ENCODE measurements at regions of chr3 and their contacts with region 1.

Region 1: GRCh38 chr3:179464323-179465089 is 13.2 kb upstream of the GNB4 start:
- DNase-seq: peak in 1 of 4 experiments; percentile 29
- ATAC-seq: peak; percentile 84
- H3K4me3 ChIP-seq: no peak overlapping the region
- H3K27ac ChIP-seq: no peak overlapping the region
- H3K4me1 ChIP-seq: peaks cover 4 to 5% of the 10 kb centered on the region in 2 experiments; a peak in 1 of 5 replicates
- H3K27me3 ChIP-seq: peaks cover under 1 to 3% of the 10 kb centered on the region in 2 experiments; a peak in 3 of 5 replicates
- CTCF ChIP-seq: no peak
- EP300 ChIP-seq: no peak
- POLR2A ChIP-seq: no peak
- RAD21 ChIP-seq: no peak

Region 2: DNA sequence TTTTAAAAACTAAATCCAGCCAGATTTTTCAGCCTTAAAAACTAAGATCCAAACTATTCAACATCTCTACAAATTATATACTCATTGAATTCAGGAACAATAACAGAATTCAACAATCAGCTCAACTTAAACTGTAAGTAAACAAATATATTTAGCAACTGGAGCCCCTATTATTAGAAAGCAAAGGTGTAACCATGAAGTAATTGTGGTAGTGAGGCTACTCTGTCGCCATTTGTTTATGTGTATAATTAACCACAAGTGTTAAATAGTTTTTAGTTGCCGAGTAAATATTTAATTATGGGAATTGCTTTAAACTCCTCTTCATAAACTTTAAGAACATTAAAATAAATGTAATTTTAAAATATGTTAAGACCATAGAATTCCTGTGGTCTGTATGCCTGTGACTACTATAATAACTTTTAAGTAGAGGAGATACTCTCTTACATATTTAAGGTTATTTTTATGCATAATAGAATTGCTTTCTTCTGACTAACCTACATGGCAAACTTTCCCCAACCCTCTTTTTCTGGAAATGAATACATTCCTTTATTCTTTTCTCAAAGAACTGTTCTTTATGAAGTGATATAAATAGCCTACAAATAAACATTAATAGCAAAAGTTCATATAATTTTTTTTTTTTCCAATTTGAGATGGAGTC is 65.8 kb before region 1 on chr3:
- CTCF ChIA-PET with region 1: no interaction called
- POLR2A ChIA-PET with region 1: no interaction called
- in situ Hi-C with region 1: no loop called
- intact Hi-C with region 1: no loop called
- DNase-seq: no peak
- ATAC-seq: no peak
- H3K4me3 ChIP-seq: no peak overlapping the region
- H3K27ac ChIP-seq: no peak overlapping the region
- H3K4me1 ChIP-seq: no peaks in the 10 kb centered on the region
- H3K27me3 ChIP-seq: no peaks in the 10 kb centered on the region
- CTCF ChIP-seq: no peak
- EP300 ChIP-seq: no peak
- POLR2A ChIP-seq: no peak
- RAD21 ChIP-seq: no peak

Region 3: GRCh38 chr3:179536256-179536655 is 71.8 kb after region 1 on chr3:
- CTCF ChIA-PET with region 1: no interaction called
- POLR2A ChIA-PET with region 1: no interaction called
- in situ Hi-C with region 1: loop called (anchors 5 kb)
- intact Hi-C with region 1: no loop called
- DNase-seq: no peak
- ATAC-seq: no peak
- H3K4me3 ChIP-seq: no peak overlapping the region
- H3K27ac ChIP-seq: no peak overlapping the region
- H3K4me1 ChIP-seq: no peaks in the 10 kb centered on the region
- H3K27me3 ChIP-seq: peaks cover 9 to 19% of the 10 kb centered on the region in 2 experiments; a peak in 4 of 5 replicates
- CTCF ChIP-seq: no peak
- EP300 ChIP-seq: no peak
- POLR2A ChIP-seq: no peak
- RAD21 ChIP-seq: no peak